IMR-90 (cell line): ENCODE measurements at regions of chr20 and their contacts with region 1.

Region 1: DNA sequence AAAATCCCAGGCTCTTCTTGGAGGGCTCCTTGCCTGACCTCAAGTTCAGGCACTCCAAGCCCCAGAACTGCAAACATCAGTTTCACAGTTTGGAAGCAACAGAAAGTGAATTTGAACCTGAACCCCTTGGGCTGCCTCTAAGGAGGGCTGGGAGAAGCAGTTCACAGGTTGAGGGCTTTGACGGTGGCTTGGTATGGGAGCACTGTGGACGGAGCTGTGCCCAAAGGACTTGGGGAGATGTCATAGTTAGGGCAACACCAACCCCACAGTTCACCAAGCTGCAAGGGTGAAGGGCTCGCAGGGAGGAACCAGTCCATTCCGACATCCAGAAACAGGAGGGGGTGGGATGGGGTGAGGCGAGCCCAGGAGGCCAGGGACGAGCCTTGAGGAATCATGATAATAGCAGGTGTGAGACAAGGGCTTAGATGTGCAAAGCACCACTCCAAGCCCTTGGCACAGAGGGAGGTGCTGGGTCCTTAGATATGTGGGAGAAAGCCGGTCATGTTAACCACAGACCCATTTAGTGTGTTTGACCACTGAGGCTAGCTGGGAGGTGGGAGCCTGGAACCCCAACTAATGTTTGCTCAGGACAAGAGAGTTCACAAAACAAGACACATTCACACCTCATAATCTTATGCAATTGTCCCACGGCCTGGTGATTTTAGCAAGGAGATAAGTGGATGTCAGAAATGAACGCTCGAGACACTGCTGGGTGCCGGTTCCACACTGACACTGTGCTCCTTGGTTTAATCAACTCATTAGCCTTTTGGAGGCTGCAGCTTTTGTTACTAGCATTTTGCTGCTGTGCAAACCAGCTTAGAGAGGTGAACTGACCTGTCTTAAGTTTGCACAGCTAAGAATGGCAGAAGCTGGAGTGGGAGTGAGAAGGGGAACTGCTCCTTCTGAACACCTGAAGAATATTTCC is 4.5 kb downstream of the CEBPB start:
- DNase-seq: peak; percentile 64
- ATAC-seq: no peak
- H3K4me3 ChIP-seq: no peak overlapping the region
- H3K27ac ChIP-seq: peak overlapping the region; percentile 98
- H3K4me1 ChIP-seq: peaks cover 11% of the 10 kb centered on the region
- H3K27me3 ChIP-seq: no peaks in the 10 kb centered on the region
- CTCF ChIP-seq: no peak
- POLR2A ChIP-seq: peak; percentile 90
- RAD21 ChIP-seq: peak; percentile 0; the same call in 1 of the 2 replicates

Region 2: GRCh38 chr20:50242853-50243609 is 47.9 kb after region 1 on chr20:
- CTCF ChIA-PET with region 1: no interaction called
- POLR2A ChIA-PET with region 1: interaction called, 20 read pairs
- dilution Hi-C with region 1: no loop called
- in situ Hi-C with region 1: no loop called
- intact Hi-C with region 1: no loop called
- DNase-seq: no peak
- ATAC-seq: no peak
- H3K4me3 ChIP-seq: no peak overlapping the region
- H3K27ac ChIP-seq: no peak overlapping the region
- H3K4me1 ChIP-seq: peaks cover 6% of the 10 kb centered on the region; the same call in 1 of the 2 replicates
- H3K27me3 ChIP-seq: no peaks in the 10 kb centered on the region
- CTCF ChIP-seq: no peak
- POLR2A ChIP-seq: no peak
- RAD21 ChIP-seq: no peak